Left lung (tissue), 14 donors: ENCODE measurements at regions of chr9 and their contacts with region 1.

Region 1: GRCh38 chr9:96320749-96321280 is 18.8 kb upstream of the HSD17B3 start:
- DNase-seq: no peak
- ATAC-seq: no peak
- H3K4me3 ChIP-seq: no peak overlapping the region
- H3K27ac ChIP-seq: no peak overlapping the region
- H3K4me1 ChIP-seq: no peaks in the 10 kb centered on the region
- H3K27me3 ChIP-seq: no peaks in the 10 kb centered on the region
- CTCF ChIP-seq: no peak

Region 2: DNA sequence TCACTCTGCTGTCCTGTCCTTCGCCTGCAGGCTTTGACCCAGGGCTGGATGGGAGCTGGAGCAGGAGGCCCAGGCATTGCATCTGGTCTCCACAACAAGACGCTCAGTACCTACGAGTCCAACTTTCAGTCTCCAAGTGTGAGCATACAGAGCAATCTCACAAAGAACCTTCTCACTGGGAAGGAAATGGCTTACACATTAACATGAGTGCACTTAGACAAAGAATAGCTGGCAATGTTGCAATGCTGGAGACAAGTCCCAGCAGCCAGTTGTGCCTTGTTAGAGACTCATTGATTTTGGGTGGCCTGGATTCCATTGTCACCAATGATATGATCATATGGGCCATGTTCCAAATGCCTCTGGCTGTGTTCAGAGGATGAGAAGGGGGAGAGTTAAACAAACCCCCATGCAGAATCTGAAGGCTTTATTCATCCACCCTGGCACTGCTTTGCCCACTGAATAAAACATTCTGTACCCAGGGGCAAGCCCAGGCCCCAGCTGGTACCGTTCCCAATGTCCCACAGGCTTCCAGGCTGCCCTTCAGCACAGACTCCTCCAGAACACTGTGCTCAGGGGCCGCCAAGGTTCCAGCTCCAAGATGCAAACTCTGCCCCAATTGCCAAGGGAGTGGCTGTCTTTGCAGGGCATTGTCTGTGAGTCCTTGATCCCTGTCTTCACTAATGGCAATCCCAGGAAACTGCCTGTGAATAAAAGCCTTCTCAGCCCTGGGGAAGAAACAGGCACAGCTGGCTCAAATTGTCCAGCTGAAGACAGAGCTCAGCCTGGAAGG is 204.3 kb before region 1 on chr9:
- intact Hi-C with region 1: no loop called
- DNase-seq: peak in 2 of 4 donors; percentile 95 to 96
- ATAC-seq: peak; percentile 95
- H3K4me3 ChIP-seq: no peak overlapping the region
- H3K27ac ChIP-seq: no peak overlapping the region
- H3K4me1 ChIP-seq: peaks cover 7 to 19% of the 10 kb centered on the region in 2 donors
- H3K27me3 ChIP-seq: no peaks in the 10 kb centered on the region
- CTCF ChIP-seq: no peak

Region 3: GRCh38 chr9:96654443-96655197 is 333.8 kb after region 1 on chr9:
- intact Hi-C with region 1: loop called in 1 of 2 experiments (anchors 5 kb)
- DNase-seq: peak; percentile 72 to 92 (median 88)
- ATAC-seq: peak; percentile 89
- H3K4me3 ChIP-seq: peak overlapping the region; percentile 59
- H3K27ac ChIP-seq: peak overlapping the region; percentile 95 to 97
- H3K4me1 ChIP-seq: peaks cover 6 to 24% of the 10 kb centered on the region in 2 donors
- H3K27me3 ChIP-seq: no peaks in the 10 kb centered on the region
- CTCF ChIP-seq: peak in 1 of 2 donors; percentile 13